PC-3 (cell line): ENCODE measurements at regions of chr1 and their contacts with region 1.

Region 1: GRCh38 chr1:65958561-65959350 is 166.1 kb downstream of the PDE4B start:
- DNase-seq: peak; percentile 85
- ATAC-seq: peak; percentile 67
- H3K4me3 ChIP-seq: no peak overlapping the region
- H3K27ac ChIP-seq: no peak overlapping the region
- H3K4me1 ChIP-seq: no peaks in the 10 kb centered on the region
- H3K27me3 ChIP-seq: peaks cover 9% of the 10 kb centered on the region
- CTCF ChIP-seq: peak; percentile 78

Region 2: GRCh38 chr1:65812065-65812464 is 146.7 kb before region 1 on chr1:
- CTCF ChIA-PET with region 1: no interaction called
- POLR2A ChIA-PET with region 1: no interaction called
- intact Hi-C with region 1: no loop called
- DNase-seq: peak; percentile 82
- ATAC-seq: no peak
- H3K4me3 ChIP-seq: no peak overlapping the region
- H3K27ac ChIP-seq: peak overlapping the region; percentile 49
- H3K4me1 ChIP-seq: peaks cover 22% of the 10 kb centered on the region
- H3K27me3 ChIP-seq: no peaks in the 10 kb centered on the region
- CTCF ChIP-seq: no peak

Region 3: DNA sequence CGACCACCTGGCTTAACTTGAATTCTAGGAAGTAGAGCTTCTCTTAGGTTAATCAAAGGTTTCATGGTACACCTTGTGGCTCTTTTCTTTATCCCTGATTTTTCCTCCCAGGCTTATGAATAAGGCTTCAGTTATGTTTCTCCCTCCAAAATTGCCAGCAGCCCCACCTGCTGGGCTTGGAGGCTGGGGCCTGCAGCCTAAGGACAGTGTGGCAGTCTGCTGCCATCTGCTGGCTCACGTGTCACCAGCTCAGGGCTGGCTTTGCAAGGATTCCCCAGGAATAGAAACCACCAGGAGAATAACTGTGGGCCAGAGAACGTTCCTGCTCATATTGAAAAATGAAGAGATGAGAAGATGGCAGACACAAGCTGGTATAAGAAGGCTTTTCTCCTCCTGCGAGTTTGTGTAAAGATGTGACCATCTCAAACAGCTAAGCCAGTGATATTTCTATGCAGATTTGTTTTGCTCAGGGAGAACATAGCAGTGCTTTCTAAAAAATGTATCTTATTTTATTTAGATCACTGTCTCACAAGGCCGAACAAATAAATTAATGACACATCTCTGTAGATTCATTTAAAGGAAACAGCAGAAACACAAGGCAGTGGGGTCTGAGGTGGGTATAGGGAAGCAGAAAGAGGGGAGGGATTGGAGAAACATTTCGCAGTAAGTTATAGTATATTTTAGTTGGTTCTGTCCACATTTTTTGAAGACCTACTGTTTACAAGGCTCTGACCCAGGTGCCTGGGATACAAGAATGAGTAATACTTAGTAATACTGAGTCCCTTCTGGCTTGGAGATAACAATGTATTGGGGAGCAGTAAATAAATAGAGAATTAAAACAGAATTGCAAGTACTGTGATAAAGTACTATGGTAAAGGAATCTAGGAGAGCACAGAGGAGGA is 284.1 kb after region 1 on chr1:
- CTCF ChIA-PET with region 1: interaction called, 5 read pairs
- POLR2A ChIA-PET with region 1: no interaction called
- intact Hi-C with region 1: loop called (anchors 1 kb)
- DNase-seq: peak; percentile 94
- ATAC-seq: peak; percentile 97
- H3K4me3 ChIP-seq: no peak overlapping the region
- H3K27ac ChIP-seq: no peak overlapping the region
- H3K4me1 ChIP-seq: peaks cover 15% of the 10 kb centered on the region
- H3K27me3 ChIP-seq: peaks cover under 1% of the 10 kb centered on the region; the same call in 1 of the 2 replicates
- CTCF ChIP-seq: peak; percentile 100

Region 4: DNA sequence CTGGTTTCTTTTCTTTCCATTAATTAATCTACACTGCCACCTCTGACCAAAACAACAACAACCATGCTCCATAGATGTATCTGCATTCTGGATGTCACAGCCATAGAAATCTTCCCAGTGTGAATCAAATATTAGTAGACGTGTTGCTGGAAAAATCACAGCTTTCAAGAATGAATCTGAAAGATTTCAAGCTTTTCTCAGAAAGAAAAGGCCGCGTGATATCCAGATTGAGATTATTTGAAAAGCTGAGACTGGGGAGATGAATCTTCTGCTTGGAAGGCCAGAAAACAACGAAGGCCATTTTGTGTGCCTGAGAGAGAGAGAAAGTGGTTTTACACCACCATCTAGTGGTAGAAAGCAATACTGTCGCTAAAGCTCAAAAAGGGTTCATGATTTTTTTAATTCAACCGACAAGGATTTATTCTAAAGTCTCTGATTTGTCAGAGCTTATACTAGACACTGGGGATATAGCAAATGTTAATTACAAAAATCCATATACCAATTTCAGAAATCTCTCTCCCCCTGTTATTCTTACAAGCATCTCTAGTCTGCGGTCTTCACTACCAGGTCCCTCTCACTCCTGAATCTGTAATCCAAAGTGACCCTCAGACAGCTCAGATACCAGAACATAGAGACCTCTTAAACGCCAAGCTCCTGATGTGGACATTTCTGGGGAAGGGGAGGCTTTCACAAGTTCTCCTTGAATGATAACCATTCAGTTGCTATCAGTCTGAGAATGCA is 487.7 kb after region 1 on chr1:
- CTCF ChIA-PET with region 1: interaction called, 3 read pairs
- POLR2A ChIA-PET with region 1: no interaction called
- intact Hi-C with region 1: loop called (anchors 1 kb)
- DNase-seq: peak; percentile 86
- ATAC-seq: peak; percentile 60
- H3K4me3 ChIP-seq: no peak overlapping the region
- H3K27ac ChIP-seq: no peak overlapping the region
- H3K4me1 ChIP-seq: no peaks in the 10 kb centered on the region
- H3K27me3 ChIP-seq: no peaks in the 10 kb centered on the region
- CTCF ChIP-seq: peak; percentile 77

Region 5: DNA sequence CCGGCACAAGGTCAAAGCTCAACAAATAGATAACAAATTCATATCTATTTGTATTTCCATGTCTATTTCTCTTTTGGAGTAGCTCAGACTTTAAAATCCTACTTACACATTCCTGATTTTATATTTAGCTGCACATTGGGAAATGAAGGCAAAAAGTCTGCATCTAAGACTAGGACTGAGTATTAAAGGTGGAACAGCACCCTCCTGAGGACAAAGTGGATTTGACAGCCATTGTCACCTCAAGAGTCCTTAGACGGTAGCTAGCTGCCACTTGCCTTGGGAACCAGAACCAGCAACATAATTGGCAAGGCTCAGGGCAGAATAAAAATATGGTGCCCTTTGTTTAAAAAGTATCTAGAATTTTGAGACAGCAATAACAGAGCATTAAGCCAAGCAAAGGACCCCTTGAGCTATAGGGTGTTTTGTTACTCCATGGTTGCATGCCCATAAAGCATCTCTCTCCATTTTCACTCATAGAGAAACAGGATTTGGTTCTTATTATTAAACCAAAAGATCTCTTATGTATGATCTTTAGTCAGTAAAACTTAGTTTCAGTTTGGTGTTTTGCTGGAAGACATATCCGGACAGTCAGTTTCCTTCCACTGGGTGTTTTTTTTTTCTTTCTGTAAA is 545.2 kb after region 1 on chr1:
- CTCF ChIA-PET with region 1: no interaction called
- POLR2A ChIA-PET with region 1: no interaction called
- intact Hi-C with region 1: loop called (anchors 5 kb)
- DNase-seq: peak; percentile 85
- ATAC-seq: peak; percentile 88
- H3K4me3 ChIP-seq: 0 out of 2 replicates have a peak overlapping the region, but pooled peaks have one; percentile 18
- H3K27ac ChIP-seq: no peak overlapping the region
- H3K4me1 ChIP-seq: no peaks in the 10 kb centered on the region
- H3K27me3 ChIP-seq: peaks cover 42% of the 10 kb centered on the region
- CTCF ChIP-seq: peak; percentile 88

Region 6: GRCh38 chr1:66725885-66726665 is 767.3 kb after region 1 on chr1:
- CTCF ChIA-PET with region 1: no interaction called
- POLR2A ChIA-PET with region 1: no interaction called
- intact Hi-C with region 1: loop called (anchors 10 kb)
- DNase-seq: peak; percentile 78
- ATAC-seq: peak; percentile 49
- H3K4me3 ChIP-seq: no peak overlapping the region
- H3K27ac ChIP-seq: no peak overlapping the region
- H3K4me1 ChIP-seq: no peaks in the 10 kb centered on the region
- H3K27me3 ChIP-seq: peaks cover 47% of the 10 kb centered on the region
- CTCF ChIP-seq: peak; percentile 96